Mammary epithelial cell (primary cell): ENCODE measurements at regions of chr18 and their contacts with region 1.

Region 1: GRCh38 chr18:2914185-2914880 is 67.5 kb downstream of the EMILIN2 start:
- DNase-seq: no peak
- H3K4me3 ChIP-seq: no peak overlapping the region
- H3K27ac ChIP-seq: no peak overlapping the region
- H3K4me1 ChIP-seq: no peaks in the 10 kb centered on the region
- H3K27me3 ChIP-seq: no peaks in the 10 kb centered on the region
- CTCF ChIP-seq: no peak

Region 2: DNA sequence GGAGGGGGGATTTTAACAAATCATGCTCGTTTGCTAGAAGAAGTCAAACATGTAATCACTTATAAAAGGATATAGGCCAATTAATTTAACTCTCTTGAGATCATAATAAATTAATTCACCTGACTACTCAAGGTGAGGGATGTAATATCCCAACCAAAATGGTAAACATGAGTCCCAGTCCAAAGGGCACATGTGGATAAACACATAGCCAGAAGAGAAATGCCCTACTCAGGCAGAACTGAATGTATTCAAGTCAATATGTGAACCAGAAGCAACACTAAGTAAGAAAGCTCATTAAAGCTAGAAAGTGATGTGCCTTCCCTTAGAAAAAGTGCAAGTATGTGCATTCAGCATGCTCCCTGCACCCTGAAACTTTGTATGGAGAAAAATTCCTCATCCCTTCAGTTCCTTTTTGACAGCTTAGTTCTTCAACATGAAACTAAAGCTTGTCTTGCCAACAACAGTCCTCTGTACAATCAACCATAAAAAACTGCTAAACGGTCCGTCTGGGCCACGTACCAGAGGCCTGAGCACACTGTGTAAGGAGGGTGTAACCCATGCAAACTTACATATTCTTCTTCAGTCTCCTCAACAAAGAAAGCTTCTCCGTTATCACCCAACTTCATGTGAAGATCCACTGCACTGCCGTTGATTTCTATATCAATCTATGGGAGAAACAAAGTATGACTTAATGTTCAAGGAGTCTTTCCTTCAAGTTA is 39.8 kb after region 1 on chr18:
- CTCF ChIA-PET with region 1: no interaction called
- dilution Hi-C with region 1: loop called (anchors 5 kb)
- in situ Hi-C with region 1: no loop called
- intact Hi-C with region 1: no loop called
- DNase-seq: no peak
- H3K4me3 ChIP-seq: no peak overlapping the region
- H3K27ac ChIP-seq: no peak overlapping the region
- H3K4me1 ChIP-seq: no peaks in the 10 kb centered on the region
- H3K27me3 ChIP-seq: no peaks in the 10 kb centered on the region
- CTCF ChIP-seq: no peak